Activated T-helper 1 cell treated with anti-CD3 and anti-CD28 coated beads, Interleukin-12 subunit alpha, Interleukin-12 subunit beta, Interleukin-2, Interleukin-4 antibody, amounts not matched to agents 30 ng/mL and 10 ng/mL and 1 ng/mL, durations not matched to agents 14 hours and 24 hours and 36 hours (primary cell): ENCODE measurements at regions of chr17 and their contacts with region 1.

Region 1: GRCh38 chr17:17591355-17592298 is at the start of gene PEMT:
- DNase-seq: peak; percentile 90
- H3K4me3 Mint-ChIP-seq: peak within 1 kb of the TSS; percentile 98
- H3K27ac Mint-ChIP-seq: peak within 1 kb of the TSS; percentile 94
- H3K4me1 Mint-ChIP-seq: peaks cover 18% of the 10 kb centered on the region
- H3K27me3 Mint-ChIP-seq: no peaks in the 10 kb centered on the region
- total RNA-seq, gene PEMT: 39.9 and 45.1 TPM in 2 replicates

Region 2: GRCh38 chr17:17237026-17237799 is 354.4 kb before region 1 on chr17 and contains the start of gene FLCN:
- intact Hi-C with region 1: loop called (anchors 5 kb)
- DNase-seq: peak; percentile 84
- H3K4me3 Mint-ChIP-seq: peak within 1 kb of the TSS; percentile 94
- H3K27ac Mint-ChIP-seq: peak within 1 kb of the TSS; percentile 99
- H3K4me1 Mint-ChIP-seq: peaks cover 25% of the 10 kb centered on the region
- H3K27me3 Mint-ChIP-seq: peaks cover 4% of the 10 kb centered on the region
- total RNA-seq, gene FLCN: 35.5 and 36.4 TPM in 2 replicates

Region 3: DNA sequence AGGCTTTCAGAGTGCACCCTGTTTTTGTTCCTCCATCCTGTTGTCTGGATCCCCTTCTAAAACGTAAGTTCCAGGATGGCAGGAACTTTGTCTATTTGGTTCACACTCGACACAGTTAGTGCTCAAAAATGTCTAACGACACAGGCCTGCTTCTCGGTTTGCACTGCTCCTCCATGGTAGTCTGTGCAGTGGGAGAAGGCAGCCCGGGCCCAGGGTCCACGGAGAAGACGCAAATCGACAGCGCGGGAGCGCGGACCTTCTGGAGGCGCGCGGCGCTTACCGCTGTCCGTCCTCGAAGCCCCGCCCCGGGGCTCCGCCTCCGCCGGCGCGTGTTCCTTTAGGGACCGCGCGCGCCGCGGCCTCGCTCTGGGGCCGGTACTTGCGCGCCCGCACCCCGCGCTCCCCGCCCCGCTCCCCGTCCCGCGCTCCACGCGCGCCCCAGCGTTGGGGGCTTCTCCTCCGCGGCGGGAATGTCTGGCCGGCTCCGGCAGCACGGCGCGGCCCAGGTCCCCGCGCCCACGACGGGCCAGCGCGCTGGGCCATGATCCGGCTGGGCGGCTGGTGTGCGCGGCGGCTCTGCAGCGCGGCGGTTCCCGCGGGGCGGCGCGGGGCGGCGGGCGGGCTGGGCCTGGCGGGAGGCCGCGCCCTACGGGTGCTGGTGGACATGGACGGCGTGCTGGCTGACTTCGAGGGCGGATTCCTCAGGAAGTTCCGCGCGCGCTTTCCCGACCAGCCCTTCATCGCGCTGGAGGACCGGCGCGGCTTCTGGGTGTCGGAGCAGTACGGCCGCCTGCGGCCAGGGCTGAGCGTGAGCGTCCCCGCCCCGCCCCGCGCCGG is 288.4 kb before region 1 on chr17 and contains the start of gene NT5M:
- intact Hi-C with region 1: loop called (anchors 2 kb)
- DNase-seq: peak; percentile 72
- H3K4me3 Mint-ChIP-seq: peak within 1 kb of the TSS; percentile 90
- H3K27ac Mint-ChIP-seq: peak within 1 kb of the TSS; percentile 97
- H3K4me1 Mint-ChIP-seq: peaks cover 36% of the 10 kb centered on the region
- H3K27me3 Mint-ChIP-seq: no peaks in the 10 kb centered on the region
- total RNA-seq, gene NT5M: 5.1 and 5.8 TPM in 2 replicates

Region 4: DNA sequence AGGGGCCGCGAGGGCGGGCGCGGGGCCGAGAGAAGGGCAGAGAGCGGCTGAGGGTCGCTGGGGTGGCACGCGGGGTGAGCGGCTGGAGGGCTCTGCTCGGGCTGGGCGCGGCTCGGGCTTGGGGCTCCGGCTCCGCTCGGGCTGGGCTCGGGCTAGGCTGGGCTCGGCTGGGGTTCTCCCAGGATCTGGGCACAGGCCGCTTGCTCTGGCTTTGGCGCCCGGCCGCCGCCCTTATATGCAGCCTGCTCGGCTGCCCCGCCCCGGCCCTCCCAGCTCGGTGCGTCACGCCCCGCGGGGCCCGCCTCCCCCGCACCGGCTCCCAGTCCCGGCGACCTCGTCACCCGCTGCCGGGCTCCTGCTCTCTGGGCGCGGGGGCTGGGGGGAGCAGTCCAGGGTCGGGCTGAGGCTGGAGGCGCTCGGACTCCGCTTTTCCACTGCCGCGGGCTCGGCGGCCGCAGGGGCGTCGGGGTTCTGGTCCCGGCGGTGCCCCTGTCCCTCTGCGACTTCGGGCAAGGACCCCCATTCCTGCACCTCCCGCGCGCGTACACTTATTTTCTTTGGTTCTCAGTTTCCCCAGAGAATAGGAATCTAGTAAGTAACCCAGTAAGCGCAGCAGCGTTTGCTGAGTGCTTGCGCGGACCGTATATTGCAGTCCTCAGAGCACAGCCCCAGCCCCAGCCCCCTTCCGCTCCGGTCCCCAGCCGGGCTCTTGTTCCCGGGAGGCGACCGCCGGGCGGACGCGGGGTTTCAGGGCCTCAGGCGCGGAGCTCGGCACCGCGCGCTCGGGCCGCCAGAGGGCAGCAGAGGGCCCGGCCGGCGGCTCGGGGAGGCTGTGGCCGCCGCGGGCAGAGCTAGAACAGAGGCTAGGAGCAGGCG is 95.2 kb before region 1 on chr17 and contains the start of gene RASD1:
- intact Hi-C with region 1: loop called (anchors 1 kb)
- DNase-seq: peak; percentile 74
- H3K4me3 Mint-ChIP-seq: peak within 1 kb of the TSS; percentile 78
- H3K27ac Mint-ChIP-seq: peak within 1 kb of the TSS; percentile 61
- H3K4me1 Mint-ChIP-seq: peaks cover 14% of the 10 kb centered on the region
- H3K27me3 Mint-ChIP-seq: peaks cover 14% of the 10 kb centered on the region
- total RNA-seq, gene RASD1: 10.1 and 12.9 TPM in 2 replicates

Region 5: DNA sequence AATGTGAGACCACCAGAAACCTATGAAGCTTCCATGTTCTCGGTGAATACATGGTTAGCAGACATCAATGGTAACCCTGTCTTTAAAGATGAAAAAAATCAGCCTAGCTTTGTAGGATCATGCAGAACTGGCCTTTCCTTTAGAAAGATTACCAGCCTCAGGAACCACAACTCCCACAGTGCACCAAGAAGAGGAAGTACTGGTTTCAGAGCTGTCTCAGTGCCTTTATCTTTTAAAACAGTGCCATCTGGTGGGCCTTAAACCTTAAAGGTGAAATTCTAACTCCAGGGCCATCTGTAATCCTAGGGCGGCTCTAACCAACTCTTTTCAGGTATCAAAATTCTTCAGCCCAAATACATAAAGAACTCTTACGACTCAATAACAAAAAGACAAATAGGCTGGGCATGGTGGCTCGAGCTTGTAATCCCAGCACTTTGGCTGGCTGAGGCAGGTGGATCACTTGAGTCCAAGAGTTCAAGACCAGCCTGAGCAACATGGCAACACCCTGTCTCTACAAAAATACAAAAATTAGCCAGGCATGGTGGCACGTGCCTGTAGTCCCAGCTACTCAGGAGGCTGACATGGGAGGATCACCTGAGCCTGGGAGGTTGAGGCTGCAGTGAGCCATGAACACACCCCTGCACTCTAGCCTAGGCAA is 441.9 kb after region 1 on chr17:
- intact Hi-C with region 1: loop called (anchors 1 kb)
- DNase-seq: peak; percentile 57
- H3K4me3 Mint-ChIP-seq: no peak overlapping the region
- H3K27ac Mint-ChIP-seq: peak overlapping the region; percentile 21
- H3K4me1 Mint-ChIP-seq: peaks cover 38% of the 10 kb centered on the region
- H3K27me3 Mint-ChIP-seq: no peaks in the 10 kb centered on the region